Activated CD8-positive, alpha-beta T cell treated with anti-CD3 and anti-CD28 coated beads, Interleukin-2, amount 10 ng/mL, durations not matched to agents 7 days and 5 days (primary cell): ENCODE measurements at regions of chr1 and their contacts with region 1.

Region 1: DNA sequence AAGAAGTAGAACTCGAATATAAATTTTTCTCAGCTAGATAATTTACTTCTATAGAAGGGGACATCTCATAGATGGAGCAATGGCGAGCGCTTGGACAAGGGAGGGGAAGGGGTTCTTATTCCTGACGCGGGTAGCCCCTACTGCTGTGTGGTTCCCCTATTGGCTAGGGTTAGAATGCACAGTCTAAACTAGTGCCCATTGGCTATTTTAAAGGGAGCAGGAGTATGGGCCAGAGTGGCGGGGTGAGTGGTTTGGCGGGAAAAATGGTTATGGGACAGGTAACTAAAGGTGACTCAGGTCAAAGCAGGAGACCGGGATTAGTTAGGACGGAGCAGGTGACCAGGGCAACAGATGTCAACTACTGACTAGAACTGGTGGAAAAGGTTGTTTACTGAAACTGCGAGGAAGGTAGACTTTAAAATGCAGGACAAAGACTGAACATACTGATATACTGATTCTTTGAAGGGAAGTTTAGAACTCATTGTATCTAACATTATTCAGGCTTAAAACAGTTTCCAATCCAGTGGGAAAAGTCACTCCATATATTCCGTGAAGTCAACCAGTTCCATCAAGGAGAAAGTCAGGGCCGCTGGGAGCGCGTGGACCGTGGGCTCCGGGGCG is 940 bp upstream of the ATAD3A start:
- DNase-seq: peak; percentile 36
- ATAC-seq: no peak
- H3K4me3 Mint-ChIP-seq: peak overlapping the region; percentile 79
- H3K27ac Mint-ChIP-seq: peak overlapping the region; percentile 91
- H3K4me1 Mint-ChIP-seq: peaks cover 18% of the 10 kb centered on the region
- H3K27me3 Mint-ChIP-seq: no peaks in the 10 kb centered on the region

Region 2: GRCh38 chr1:1399187-1399871 is 111.7 kb before region 1 on chr1 and contains the start of gene CCNL2:
- CTCF ChIA-PET with region 1: interaction called, 13 read pairs
- POLR2A ChIA-PET with region 1: no interaction called
- DNase-seq: peak; percentile 99
- ATAC-seq: peak; percentile 96
- H3K4me3 Mint-ChIP-seq: peak within 1 kb of the TSS; percentile 92
- H3K27ac Mint-ChIP-seq: peak within 1 kb of the TSS; percentile 90
- H3K4me1 Mint-ChIP-seq: peaks cover 51% of the 10 kb centered on the region
- H3K27me3 Mint-ChIP-seq: no peaks in the 10 kb centered on the region
- total RNA-seq, gene CCNL2: 98.3 to 110 TPM

Region 3: DNA sequence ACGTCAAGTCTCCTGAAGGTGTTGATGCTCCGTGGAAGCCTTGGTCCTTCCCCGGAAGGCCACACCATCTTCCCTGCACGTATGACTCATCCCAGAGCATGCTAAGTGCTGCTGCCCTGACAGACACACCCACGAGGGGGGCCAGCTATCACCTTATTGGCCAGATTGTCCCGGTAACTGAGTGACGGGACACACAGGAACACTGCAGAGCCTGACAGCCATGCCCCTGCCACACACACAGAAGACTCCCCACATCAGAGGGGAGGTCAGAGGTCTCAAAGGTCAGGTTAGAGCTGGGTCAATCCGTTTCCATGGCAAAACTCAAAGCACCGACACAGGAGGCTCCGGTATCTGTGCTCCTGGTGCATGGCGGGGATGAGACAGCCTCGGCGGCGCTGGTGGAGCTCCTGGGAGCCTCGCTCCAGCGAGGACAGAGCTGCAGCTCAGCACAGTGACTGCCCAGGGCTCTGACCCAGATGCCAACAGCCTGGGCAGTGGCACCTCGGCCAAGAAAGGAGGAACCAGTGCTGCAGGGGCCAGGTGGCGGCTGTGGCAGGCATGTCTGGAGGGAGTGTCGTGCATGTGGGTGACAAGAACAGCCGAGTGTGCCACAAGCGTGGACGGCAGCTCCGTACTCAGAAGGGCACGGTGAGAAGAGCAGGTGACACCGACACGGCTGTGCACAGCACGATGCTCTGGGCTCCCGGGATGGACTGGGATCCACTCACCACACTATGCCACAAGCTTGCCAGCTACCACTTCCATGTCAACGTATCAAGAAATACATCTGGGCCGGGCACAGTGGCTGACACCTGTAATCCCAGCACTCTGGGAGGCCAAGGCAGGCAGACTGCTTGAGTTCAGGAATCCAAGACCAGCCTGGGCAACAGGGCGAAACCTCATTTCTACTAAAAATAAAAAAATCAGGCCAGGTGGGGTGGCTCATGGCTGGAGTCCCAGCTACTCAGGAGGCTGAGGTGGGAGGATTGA is 44.2 kb after region 1 on chr1:
- CTCF ChIA-PET with region 1: no interaction called
- POLR2A ChIA-PET with region 1: no interaction called
- DNase-seq: no peak
- ATAC-seq: no peak
- H3K4me3 Mint-ChIP-seq: no peak overlapping the region
- H3K27ac Mint-ChIP-seq: peak overlapping the region; percentile 11
- H3K4me1 Mint-ChIP-seq: peaks cover 8% of the 10 kb centered on the region
- H3K27me3 Mint-ChIP-seq: no peaks in the 10 kb centered on the region

Region 4: GRCh38 chr1:1615256-1616044 is 104.4 kb after region 1 on chr1 and contains the start of gene MIB2:
- CTCF ChIA-PET with region 1: no interaction called
- POLR2A ChIA-PET with region 1: no interaction called
- DNase-seq: peak; percentile 97
- ATAC-seq: peak; percentile 86
- H3K4me3 Mint-ChIP-seq: peak within 1 kb of the TSS; percentile 88
- H3K27ac Mint-ChIP-seq: peak within 1 kb of the TSS; percentile 94
- H3K4me1 Mint-ChIP-seq: peaks cover 39% of the 10 kb centered on the region
- H3K27me3 Mint-ChIP-seq: no peaks in the 10 kb centered on the region
- total RNA-seq, gene MIB2: 49.3 to 50.7 TPM